ENCODE measurements at regions of chr2 and their contacts with region 1.

Region 1: GRCh38 chr2:109128048-109128465 is 948 bp upstream of the SH3RF3 start:
- DNase-seq: peak; percentile 86 to 91
- ATAC-seq: peak; percentile 80 to 86 (median 84)
- H3K4me3 ChIP-seq: peak overlapping the region; percentile 86
- H3K27ac ChIP-seq: peak overlapping the region; percentile 82
- H3K4me1 ChIP-seq: peaks cover 28% of the 10 kb centered on the region
- H3K27me3 ChIP-seq: no peaks in the 10 kb centered on the region
- CTCF ChIP-seq: peak; percentile 94

Region 2: DNA sequence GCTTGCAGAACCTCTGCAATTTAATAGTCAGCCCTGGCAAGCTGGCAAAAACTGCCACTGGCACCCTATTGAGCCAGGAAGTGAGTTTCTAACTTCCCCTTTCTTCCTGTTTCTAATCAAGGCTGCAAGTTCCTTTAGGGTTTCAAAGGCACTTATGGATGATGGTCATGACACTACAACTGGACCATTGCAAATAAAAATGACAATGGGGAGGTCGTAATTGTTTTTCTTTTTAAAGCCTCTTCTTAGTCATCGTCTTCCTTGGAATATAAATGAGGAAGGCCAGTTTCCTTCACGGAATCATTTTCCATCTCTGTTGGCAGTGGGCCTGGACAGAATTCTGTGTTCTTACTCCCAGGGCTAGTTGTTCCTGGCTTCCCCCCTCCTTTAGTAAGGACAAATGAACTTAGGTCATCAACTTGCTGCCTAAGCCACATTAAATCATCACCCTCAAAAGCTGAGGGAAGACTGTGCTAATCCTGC is 36.7 kb after region 1 on chr2:
- intact Hi-C with region 1: loop called in 1 of 2 experiments (anchors 5 kb)
- DNase-seq: peak in 1 of 2 donors; percentile 44
- ATAC-seq: no peak
- H3K4me3 ChIP-seq: no peak overlapping the region
- H3K27ac ChIP-seq: peak overlapping the region; percentile 55
- H3K4me1 ChIP-seq: peaks cover 44% of the 10 kb centered on the region
- H3K27me3 ChIP-seq: no peaks in the 10 kb centered on the region
- CTCF ChIP-seq: no peak

Region 3: GRCh38 chr2:109173311-109174171 is 45.5 kb after region 1 on chr2:
- intact Hi-C with region 1: loop called (anchors 5 kb)
- DNase-seq: peak; percentile 90
- ATAC-seq: peak; percentile 80 to 91 (median 85)
- H3K4me3 ChIP-seq: peak overlapping the region; percentile 36
- H3K27ac ChIP-seq: peak overlapping the region; percentile 80
- H3K4me1 ChIP-seq: peaks cover 80% of the 10 kb centered on the region
- H3K27me3 ChIP-seq: no peaks in the 10 kb centered on the region
- CTCF ChIP-seq: no peak

Region 4: DNA sequence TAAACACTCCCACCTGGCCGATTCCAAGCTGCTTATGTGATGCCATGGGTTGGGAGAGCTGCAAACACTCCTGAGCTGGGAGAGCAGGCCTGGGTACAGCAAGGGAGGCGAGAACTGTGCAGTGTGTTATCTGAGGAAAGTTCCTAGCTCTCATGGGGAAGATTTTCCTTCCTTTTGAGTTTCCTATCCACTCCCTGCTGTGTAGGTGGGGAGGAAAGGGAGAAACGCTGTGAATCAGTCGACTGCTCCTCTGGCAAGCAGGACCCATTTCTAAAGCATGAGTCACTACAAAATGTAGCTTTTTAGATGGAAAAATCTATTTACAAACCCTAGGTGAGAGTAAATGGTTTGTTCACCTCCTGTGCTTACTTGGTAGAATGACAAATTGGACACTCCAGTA is 81.4 kb after region 1 on chr2:
- intact Hi-C with region 1: loop called in 1 of 2 experiments (anchors 5 kb)
- DNase-seq: no peak
- ATAC-seq: no peak
- H3K4me3 ChIP-seq: no peak overlapping the region
- H3K27ac ChIP-seq: peak overlapping the region; percentile 9
- H3K4me1 ChIP-seq: peaks cover 37% of the 10 kb centered on the region
- H3K27me3 ChIP-seq: no peaks in the 10 kb centered on the region
- CTCF ChIP-seq: no peak

Region 5: DNA sequence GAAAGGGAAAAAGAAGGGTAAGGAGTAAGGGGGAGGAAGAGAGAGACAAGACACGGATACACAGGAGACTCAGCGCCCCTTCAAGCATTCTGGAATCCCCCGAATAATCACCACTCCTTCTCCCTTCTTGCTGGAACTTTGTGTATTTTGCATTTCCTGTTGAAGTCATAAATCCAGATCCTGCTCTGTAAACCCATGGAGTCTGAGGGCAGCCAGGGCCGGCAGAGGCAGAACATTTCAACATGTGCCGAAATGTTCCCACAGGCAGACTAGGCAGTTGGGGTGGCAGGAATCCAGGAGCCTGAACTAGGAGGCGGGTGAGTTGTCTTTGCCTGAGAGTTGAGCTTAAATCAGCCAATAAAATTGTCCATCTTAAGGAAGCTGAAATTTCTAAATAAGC is 194.1 kb after region 1 on chr2:
- intact Hi-C with region 1: loop called in 1 of 2 experiments (anchors 5 kb)
- DNase-seq: peak; percentile 90 to 95
- ATAC-seq: peak; percentile 58 to 77 (median 66)
- H3K4me3 ChIP-seq: no peak overlapping the region
- H3K27ac ChIP-seq: peak overlapping the region; percentile 65
- H3K4me1 ChIP-seq: peaks cover 66% of the 10 kb centered on the region
- H3K27me3 ChIP-seq: no peaks in the 10 kb centered on the region
- CTCF ChIP-seq: no peak

Region 6: GRCh38 chr2:109466673-109467575 is 338.9 kb after region 1 on chr2:
- intact Hi-C with region 1: no loop called
- DNase-seq: no peak
- ATAC-seq: peak; percentile 82 to 92 (median 88)
- H3K4me3 ChIP-seq: peak overlapping the region; percentile 42
- H3K27ac ChIP-seq: peak overlapping the region; percentile 57
- H3K4me1 ChIP-seq: peaks cover 22% of the 10 kb centered on the region
- H3K27me3 ChIP-seq: no peaks in the 10 kb centered on the region
- CTCF ChIP-seq: no peak

Region 7: GRCh38 chr2:109510136-109511028 is 382.3 kb after region 1 on chr2:
- intact Hi-C with region 1: loop called (anchors 1 to 5 kb)
- DNase-seq: peak; percentile 79 to 89
- ATAC-seq: peak; percentile 72 to 85 (median 78)
- H3K4me3 ChIP-seq: no peak overlapping the region
- H3K27ac ChIP-seq: peak overlapping the region; percentile 16
- H3K4me1 ChIP-seq: peaks cover 20% of the 10 kb centered on the region
- H3K27me3 ChIP-seq: no peaks in the 10 kb centered on the region
- CTCF ChIP-seq: peak; percentile 91